ENCODE measurements at regions of chr12 and their contacts with region 1.

Region 1: GRCh38 chr12:47949441-47950308 is 13.7 kb upstream of the TMEM106C start:
- ATAC-seq: peak; percentile 75 to 97 (median 80)
- H3K4me3 ChIP-seq: no peak overlapping the region
- H3K27ac ChIP-seq: no peak overlapping the region
- H3K4me1 ChIP-seq: no peaks in the 10 kb centered on the region

Region 2: GRCh38 chr12:47904713-47905310 is 44.9 kb before region 1 on chr12 and contains the start of gene VDR:
- in situ Hi-C with region 1: loop called in 1 of 9 experiments (anchors 10 kb)
- ATAC-seq: peak; percentile 68 to 95 (median 92)
- H3K4me3 ChIP-seq: peak within 1 kb of the TSS; percentile 39 to 61 (median 45)
- H3K27ac ChIP-seq: peak within 1 kb of the TSS in 1 of 2 donors; percentile 16
- H3K4me1 ChIP-seq: no peaks in the 10 kb centered on the region
- total RNA-seq, gene VDR: 0.08 to 70.8 (median 0.87) TPM

Region 3: GRCh38 chr12:48105862-48106680 is 156.4 kb after region 1 on chr12 and contains the start of gene SENP1:
- in situ Hi-C with region 1: no loop called
- ATAC-seq: peak; percentile 92 to 96 (median 93)
- H3K4me3 ChIP-seq: peak within 1 kb of the TSS; percentile 64 to 85 (median 69)
- H3K27ac ChIP-seq: peak within 1 kb of the TSS; percentile 95 to 97
- H3K4me1 ChIP-seq: peaks cover 11 to 15% of the 10 kb centered on the region in 2 donors
- total RNA-seq, gene SENP1: 9.5 to 28.8 (median 19.2) TPM

Region 4: DNA sequence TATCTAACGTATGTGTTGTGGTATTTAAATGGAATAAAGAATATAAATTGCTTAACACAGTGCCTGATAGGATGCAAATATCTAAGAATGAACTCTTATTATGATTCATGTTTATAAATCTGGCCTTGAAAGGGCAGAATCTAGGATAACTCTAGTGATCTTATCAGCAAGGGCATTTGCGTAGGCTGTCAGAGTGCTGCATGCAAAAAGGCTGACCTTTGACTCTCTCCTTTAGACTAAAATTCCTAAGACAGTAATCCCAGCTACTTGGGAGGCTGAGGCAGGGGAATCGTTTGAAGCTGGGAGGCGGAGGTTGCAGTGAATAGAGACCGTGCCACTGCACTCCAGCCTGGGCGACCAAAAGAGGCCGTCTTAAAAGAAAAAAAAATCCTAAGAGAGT is 491.4 kb after region 1 on chr12:
- in situ Hi-C with region 1: no loop called
- ATAC-seq: no peak
- H3K4me3 ChIP-seq: no peak overlapping the region
- H3K27ac ChIP-seq: no peak overlapping the region
- H3K4me1 ChIP-seq: no peaks in the 10 kb centered on the region

Measured in motor neuron (in vitro differentiated cells).